Body of pancreas (tissue), 4 donors: ENCODE measurements at regions of chr3 and their contacts with region 1.

Region 1: DNA sequence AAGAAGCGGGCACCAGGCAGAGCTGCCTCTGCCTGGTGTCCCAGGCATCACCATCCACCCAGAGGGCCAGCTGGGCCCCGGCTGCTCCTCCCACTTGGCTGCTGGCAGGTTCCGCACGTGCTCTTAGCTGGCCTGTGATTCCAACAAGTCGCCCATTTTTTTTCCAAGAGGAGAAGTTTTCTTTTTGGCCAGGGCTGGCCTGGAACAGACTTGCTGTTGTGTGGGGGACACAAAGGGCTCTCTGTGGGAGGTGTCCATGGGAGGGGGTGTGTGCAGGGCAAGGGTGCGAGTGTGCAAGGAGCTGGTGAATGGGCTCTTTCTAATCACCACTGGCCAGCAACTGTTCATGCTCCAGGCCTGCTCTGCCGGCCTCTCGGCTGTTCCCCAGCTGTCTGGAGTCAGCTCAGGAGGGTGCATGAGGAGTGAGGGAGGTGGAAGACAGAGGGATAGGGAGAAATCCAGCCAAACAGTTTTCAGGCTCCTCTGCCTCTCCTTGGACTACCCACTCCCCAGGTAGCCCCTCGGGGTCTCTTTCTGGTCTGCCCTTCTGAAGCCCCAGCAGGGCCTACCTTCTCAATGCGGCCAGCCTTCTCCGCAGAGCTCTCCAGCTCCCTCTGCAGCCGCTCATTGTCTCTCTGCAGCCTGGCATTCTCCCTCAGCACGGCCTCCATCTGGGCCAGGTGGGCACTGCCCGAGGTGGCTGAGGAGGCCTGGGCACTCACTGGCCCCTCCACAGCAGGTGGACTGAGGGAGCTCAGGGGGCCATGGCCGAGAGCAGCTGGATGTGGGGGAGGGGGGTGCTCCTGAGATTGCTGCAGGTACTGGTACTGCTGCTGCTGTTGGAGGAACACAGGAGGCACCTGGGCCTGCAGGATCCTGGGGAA is 7.1 kb downstream of the AMOTL2 start:
- DNase-seq: peak in 2 of 4 donors; percentile 49 to 52
- ATAC-seq: peak; percentile 10
- H3K4me3 ChIP-seq: no peak overlapping the region
- H3K27ac ChIP-seq: peak overlapping the region in 3 of 4 donors; percentile 98 to 99 (median 98)
- H3K4me1 ChIP-seq: peaks cover 95% of the 10 kb centered on the region
- H3K27me3 ChIP-seq: no peaks in the 10 kb centered on the region
- CTCF ChIP-seq: no peak
- POLR2A ChIP-seq: no peak

Region 2: DNA sequence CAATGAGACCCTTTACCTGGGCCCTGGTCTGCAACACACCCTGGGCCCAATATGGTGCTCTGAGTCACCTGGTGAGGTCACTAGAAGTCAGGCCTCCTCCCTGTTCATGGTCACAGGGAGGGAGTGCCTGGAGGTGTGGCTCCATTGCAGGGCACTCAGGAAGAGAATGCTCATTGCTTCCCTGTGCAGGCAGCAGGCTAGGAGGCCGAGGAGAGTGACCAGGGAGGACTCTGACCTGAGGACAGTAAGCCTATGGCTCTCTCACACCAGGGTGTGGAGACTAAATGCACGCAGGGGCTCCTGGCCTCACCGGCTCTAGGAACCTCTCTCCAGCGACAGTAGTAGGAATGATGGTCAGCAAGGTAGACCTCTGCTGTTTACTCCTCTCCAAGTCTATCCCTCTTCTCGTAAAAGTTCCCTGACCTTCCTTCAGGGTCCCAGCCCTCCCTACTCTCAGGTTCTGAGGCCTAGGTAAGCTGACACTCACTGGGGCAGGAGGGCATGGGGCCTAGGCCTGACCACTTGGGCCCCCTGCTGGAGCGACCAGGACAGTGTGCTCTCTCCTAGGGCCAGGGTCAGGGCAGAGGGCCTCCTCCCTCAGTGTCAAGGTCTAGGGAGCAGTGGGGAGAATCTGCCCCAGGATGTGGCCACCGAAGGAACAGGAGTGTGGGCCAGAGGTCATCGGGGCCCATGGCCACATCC is 327.9 kb before region 1 on chr3:
- intact Hi-C with region 1: no loop called
- DNase-seq: no peak
- ATAC-seq: peak; percentile 24
- H3K4me3 ChIP-seq: no peak overlapping the region
- H3K27ac ChIP-seq: no peak overlapping the region
- H3K4me1 ChIP-seq: no peaks in the 10 kb centered on the region
- H3K27me3 ChIP-seq: no peaks in the 10 kb centered on the region
- CTCF ChIP-seq: peak in 1 of 7 experiments; percentile 14
- POLR2A ChIP-seq: no peak

Region 3: GRCh38 chr3:134315286-134316106 is 51.7 kb before region 1 on chr3:
- intact Hi-C with region 1: loop called (anchors 5 kb)
- DNase-seq: peak in 2 of 4 donors; percentile 25 to 48
- ATAC-seq: no peak
- H3K4me3 ChIP-seq: no peak overlapping the region
- H3K27ac ChIP-seq: peak overlapping the region; percentile 29 to 94 (median 86)
- H3K4me1 ChIP-seq: peaks cover 46% of the 10 kb centered on the region
- H3K27me3 ChIP-seq: no peaks in the 10 kb centered on the region
- CTCF ChIP-seq: no peak
- POLR2A ChIP-seq: no peak